GM10248 (cell line): ENCODE measurements at regions of chr15 and their contacts with region 1.

Region 1: DNA sequence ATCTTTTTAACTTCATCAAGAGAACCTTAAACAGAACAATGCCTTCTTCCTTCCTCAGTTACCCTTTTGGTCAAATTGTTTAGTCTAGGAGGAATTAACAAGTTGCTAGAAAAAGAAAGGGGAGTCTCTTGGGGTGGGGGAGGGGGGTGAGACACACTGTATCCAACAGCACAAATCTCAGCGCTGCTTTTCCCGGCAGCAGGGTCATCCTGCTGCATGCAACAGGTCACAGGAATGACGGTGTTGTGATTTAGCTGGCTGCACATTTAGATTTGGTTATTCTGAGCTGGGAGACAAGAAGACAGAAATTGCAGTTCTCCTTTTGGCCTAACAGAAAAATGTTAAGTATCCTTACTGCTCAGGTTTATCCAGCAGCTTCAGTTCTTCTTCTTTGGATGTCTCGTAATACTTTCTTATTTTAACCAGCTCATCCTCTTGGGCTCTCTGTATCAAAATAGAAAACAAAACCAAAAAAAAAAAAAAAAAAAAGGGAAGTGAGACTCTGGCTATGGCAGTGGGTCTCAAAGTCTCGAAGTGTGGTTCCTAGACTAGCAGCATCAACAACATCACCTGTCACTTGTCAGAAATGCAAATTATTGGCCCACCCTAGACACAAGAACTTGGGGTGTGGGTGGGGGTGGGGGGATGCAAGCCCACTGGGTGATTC is 190.5 kb downstream of the GREM1 start:
- DNase-seq: peak; percentile 70
- CTCF ChIP-seq: no peak

Region 2: GRCh38 chr15:32834156-32834555 is 74.1 kb before region 1 on chr15:
- CTCF ChIA-PET with region 1: no interaction called
- POLR2A ChIA-PET with region 1: no interaction called
- DNase-seq: peak; percentile 38
- CTCF ChIP-seq: no peak

Region 3: GRCh38 chr15:32867313-32867626 is 41.0 kb before region 1 on chr15:
- CTCF ChIA-PET with region 1: interaction called, 12 read pairs
- POLR2A ChIA-PET with region 1: no interaction called
- DNase-seq: no peak
- CTCF ChIP-seq: no peak

Region 4: DNA sequence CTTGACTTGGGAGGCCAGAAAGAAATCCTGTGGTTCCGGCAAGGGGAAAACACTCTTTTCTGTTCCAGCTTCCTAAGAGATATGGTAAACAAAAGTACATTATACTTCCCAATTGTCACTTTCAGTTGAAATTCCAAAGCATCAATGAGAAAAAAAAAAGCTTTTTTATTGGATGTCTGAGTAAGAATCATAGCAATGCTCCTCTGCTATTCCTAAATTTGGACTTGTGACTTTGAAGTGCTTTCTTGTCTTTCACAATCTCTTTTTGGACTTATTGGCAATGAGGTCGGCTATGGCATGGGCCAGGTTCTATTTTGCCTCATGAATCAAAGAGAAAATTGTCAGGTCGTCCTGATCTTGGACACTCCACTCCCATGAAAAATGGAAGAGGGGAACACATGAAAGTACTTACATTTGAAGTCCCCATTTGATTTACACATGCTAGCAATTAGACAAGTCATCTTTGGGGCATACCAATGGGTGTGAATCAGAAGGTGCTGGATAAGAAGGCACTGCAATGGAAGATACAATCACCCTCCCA is 20.0 kb before region 1 on chr15:
- CTCF ChIA-PET with region 1: interaction called, 6 read pairs
- POLR2A ChIA-PET with region 1: interaction called, 13 read pairs
- DNase-seq: no peak
- CTCF ChIP-seq: no peak

Region 5: GRCh38 chr15:32936283-32936918 is 28.1 kb after region 1 on chr15:
- CTCF ChIA-PET with region 1: interaction called, 17 read pairs
- POLR2A ChIA-PET with region 1: no interaction called
- DNase-seq: peak; percentile 22
- CTCF ChIP-seq: peak; percentile 25

Region 6: DNA sequence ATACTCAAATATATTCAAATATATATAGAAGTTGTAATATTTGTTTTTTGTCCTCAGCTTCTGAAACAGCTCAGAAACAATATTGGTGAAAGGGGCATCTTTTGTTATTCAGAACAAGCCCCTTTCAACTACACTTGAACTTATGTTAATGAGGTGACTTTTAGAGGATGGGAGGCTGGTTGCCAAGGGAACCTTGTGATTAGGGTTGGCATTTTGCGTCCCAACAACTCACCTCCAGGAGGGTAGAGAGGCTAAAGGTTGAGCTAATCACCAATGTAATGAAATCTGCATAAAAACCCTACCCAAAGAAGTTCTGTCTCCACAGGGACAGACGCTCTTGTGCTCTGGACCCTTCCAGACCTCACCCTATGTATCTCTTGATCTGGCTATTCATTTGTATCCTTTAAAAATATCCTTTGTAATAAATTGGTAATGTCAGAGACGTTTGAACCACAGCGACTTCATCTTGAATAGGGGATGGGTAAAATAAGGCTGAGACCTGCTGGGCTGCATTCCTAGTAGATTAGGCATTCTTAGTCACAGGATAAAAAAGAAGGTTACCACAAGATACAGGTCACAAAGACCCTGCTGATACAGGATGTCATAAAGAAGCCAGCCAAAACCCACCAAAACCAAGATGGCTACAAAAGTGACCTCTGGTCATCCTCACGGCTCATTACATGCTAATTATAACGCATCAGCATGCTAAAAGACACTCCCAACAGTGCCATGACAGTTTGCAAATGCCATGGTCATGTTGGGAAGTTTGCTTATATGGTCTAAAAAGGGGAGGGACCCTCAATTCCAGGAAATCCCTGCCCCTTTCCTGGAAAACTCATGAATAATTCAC is 175.2 kb after region 1 on chr15:
- CTCF ChIA-PET with region 1: no interaction called
- POLR2A ChIA-PET with region 1: no interaction called
- DNase-seq: no peak
- CTCF ChIP-seq: no peak